Right ventricle myocardium inferior (tissue), 1 donor: ENCODE measurements at regions of chr1 and their contacts with region 1.

Region 1: GRCh38 chr1:35319988-35320713 is 51.6 kb downstream of the ZMYM4 start:
- DNase-seq: no peak
- ATAC-seq: peak; percentile 86

Region 2: DNA sequence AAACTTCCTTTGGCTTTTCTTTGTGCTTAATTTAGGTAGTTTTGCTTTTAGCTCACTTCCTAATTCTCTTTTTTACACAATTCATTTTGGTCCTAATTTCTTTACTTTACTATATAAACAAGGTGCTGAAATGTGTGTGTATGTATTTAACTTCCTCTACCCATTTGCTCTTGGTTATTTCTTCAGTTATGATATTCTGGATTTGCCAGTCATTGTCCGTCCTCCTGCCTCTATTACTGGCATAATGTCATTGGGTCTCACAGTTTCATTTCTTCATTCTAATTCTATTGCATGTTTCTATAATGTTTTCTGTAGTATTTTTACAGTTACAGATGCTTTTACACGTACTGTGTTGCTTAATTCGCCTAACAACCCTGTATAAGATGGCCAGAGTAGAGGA is 44.6 kb after region 1 on chr1:
- intact Hi-C with region 1: loop called (anchors 5 kb)
- DNase-seq: no peak
- ATAC-seq: no peak

Region 3: GRCh38 chr1:35592991-35593694 is 273.0 kb after region 1 on chr1:
- intact Hi-C with region 1: no loop called
- DNase-seq: no peak
- ATAC-seq: no peak